Activated naive CD4-positive, alpha-beta T cell treated with anti-CD3 and anti-CD28 coated beads for 36 hours (primary cell): ENCODE measurements at regions of chr9 and their contacts with region 1.

Region 1: GRCh38 chr9:122827761-122828093 is 661 bp downstream of the PDCL start:
- DNase-seq: no peak
- H3K4me3 Mint-ChIP-seq: peak overlapping the region; percentile 98
- H3K27ac Mint-ChIP-seq: peak overlapping the region; percentile 90
- H3K4me1 Mint-ChIP-seq: peaks cover 25% of the 10 kb centered on the region
- H3K27me3 Mint-ChIP-seq: no peaks in the 10 kb centered on the region

Region 2: DNA sequence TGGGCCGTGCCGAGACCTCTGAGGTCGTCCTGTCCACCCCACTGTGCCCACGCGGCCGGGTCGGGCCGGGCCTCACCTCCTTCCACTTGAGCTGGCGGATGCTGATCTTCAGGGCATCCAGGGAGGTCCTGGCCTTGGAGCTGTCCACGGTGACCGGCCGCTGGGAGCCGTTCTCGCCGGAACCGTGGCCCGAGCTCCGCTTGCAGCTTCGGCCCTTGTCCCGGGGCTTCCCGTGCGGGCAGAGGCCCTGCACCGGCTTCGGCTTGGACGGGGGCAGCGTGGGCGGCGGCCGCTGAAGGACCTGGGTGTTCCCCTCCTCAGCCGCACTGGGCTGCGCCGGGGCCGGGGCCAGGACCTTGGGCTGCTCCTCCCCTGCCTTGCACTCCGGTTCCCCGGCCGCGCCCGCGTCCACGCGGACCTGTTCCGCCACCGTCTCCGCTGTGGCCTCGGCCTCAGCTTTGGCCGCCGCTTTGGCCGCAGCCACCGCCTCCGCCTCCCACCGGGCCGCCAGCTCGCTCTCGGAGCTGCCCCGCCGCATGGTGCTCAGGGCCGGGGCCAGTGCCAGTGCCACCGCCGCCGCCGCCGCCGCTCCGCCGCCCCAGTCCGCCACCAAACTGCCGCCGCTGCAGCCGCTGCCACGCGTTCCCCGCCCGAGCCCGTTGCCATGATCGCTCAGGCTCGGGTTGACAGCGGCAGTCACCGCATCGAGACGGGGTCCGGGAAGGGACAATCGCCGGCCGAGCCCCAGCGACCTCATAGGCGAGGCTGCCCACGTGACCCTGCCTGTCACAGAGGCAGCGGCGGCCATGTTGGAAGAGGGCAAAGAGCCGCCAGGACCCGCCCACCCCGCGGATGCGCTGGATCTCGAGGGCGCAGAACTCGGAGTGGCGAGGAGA is 734.9 kb before region 1 on chr9 and contains the start of gene TTLL11:
- CTCF ChIA-PET with region 1: no interaction called
- intact Hi-C with region 1: loop called (anchors 2 kb)
- DNase-seq: peak; percentile 97
- H3K4me3 Mint-ChIP-seq: peak within 1 kb of the TSS; percentile 85
- H3K27ac Mint-ChIP-seq: no peak within 1 kb of the TSS
- H3K4me1 Mint-ChIP-seq: peaks cover 32% of the 10 kb centered on the region
- H3K27me3 Mint-ChIP-seq: peaks cover 3% of the 10 kb centered on the region
- total RNA-seq, gene TTLL11: 0.84 to 0.86 TPM

Region 3: GRCh38 chr9:122816163-122816867 is 11.4 kb before region 1 on chr9:
- CTCF ChIA-PET with region 1: no interaction called
- intact Hi-C with region 1: loop called (anchors 1 kb)
- DNase-seq: peak; percentile 66
- H3K4me3 Mint-ChIP-seq: peak overlapping the region; percentile 65
- H3K27ac Mint-ChIP-seq: peak overlapping the region; percentile 89
- H3K4me1 Mint-ChIP-seq: peaks cover 22% of the 10 kb centered on the region
- H3K27me3 Mint-ChIP-seq: no peaks in the 10 kb centered on the region

Region 4: GRCh38 chr9:122904823-122905710 is 77.3 kb after region 1 on chr9 and contains the start of gene RC3H2:
- CTCF ChIA-PET with region 1: no interaction called
- intact Hi-C with region 1: loop called (anchors 1 kb)
- DNase-seq: peak; percentile 99
- H3K4me3 Mint-ChIP-seq: peak within 1 kb of the TSS; percentile 89
- H3K27ac Mint-ChIP-seq: peak within 1 kb of the TSS; percentile 94
- H3K4me1 Mint-ChIP-seq: peaks cover 18% of the 10 kb centered on the region
- H3K27me3 Mint-ChIP-seq: no peaks in the 10 kb centered on the region
- total RNA-seq, gene RC3H2: 20.2 to 21.3 TPM

Region 5: DNA sequence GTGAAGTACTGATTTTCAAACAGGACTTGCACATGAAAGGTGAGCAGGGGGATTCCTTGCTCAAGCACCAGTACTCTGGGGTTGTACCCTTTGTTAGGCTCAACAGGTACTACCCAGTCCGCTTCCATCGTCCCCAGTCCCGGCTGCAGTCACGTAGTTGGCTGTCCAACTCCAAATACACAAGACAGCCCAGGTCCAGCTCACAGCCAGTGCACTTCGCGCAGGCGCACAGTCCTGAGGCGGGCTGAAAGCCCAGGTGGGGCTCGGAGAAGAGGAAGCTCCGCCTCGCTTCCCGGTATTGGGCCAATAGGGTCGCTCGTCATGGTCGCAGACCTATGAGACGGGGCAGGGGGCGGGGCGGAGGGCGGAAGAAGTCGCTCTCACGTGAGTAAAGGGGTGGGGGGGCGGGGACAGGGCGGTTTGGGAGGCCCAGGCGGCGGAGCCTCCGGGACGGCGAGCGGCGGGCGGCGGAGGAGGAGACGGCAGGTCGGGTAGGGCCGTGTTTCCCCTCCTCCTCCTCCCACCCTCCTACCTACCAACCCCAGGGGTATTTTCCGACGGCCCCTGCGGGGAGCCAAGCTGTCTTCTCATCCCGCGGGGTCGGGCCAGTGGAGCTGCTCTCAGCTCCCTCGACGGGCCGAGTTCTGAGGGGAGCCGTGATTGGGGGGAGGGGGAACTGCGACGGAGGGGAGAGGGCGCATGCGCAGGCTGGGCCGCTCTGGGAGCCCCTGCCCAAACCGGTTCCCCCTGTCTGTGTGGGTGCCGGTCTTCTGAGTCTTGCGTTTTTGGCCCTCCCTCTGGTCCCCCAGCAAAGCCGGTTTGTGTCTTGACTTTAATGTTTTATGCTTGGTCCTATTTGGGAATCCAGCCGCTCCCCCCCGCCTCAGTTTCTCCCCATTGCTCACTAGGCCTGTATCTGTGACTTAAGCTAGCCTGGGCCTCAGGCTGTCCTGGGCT is 113.2 kb after region 1 on chr9 and contains the start of gene RABGAP1:
- CTCF ChIA-PET with region 1: no interaction called
- intact Hi-C with region 1: loop called (anchors 1 kb)
- DNase-seq: peak; percentile 99
- H3K4me3 Mint-ChIP-seq: peak within 1 kb of the TSS; percentile 96
- H3K27ac Mint-ChIP-seq: peak within 1 kb of the TSS; percentile 83
- H3K4me1 Mint-ChIP-seq: peaks cover 37% of the 10 kb centered on the region
- H3K27me3 Mint-ChIP-seq: no peaks in the 10 kb centered on the region
- total RNA-seq, gene RABGAP1: 19.7 to 21.3 TPM

Region 6: GRCh38 chr9:123282362-123283047 is 454.8 kb after region 1 on chr9:
- CTCF ChIA-PET with region 1: no interaction called
- intact Hi-C with region 1: no loop called
- DNase-seq: no peak
- H3K4me3 Mint-ChIP-seq: no peak overlapping the region
- H3K27ac Mint-ChIP-seq: no peak overlapping the region
- H3K4me1 Mint-ChIP-seq: peaks cover 5% of the 10 kb centered on the region
- H3K27me3 Mint-ChIP-seq: no peaks in the 10 kb centered on the region